ENCODE measurements at regions of chr14 and their contacts with region 1.

Region 1: DNA sequence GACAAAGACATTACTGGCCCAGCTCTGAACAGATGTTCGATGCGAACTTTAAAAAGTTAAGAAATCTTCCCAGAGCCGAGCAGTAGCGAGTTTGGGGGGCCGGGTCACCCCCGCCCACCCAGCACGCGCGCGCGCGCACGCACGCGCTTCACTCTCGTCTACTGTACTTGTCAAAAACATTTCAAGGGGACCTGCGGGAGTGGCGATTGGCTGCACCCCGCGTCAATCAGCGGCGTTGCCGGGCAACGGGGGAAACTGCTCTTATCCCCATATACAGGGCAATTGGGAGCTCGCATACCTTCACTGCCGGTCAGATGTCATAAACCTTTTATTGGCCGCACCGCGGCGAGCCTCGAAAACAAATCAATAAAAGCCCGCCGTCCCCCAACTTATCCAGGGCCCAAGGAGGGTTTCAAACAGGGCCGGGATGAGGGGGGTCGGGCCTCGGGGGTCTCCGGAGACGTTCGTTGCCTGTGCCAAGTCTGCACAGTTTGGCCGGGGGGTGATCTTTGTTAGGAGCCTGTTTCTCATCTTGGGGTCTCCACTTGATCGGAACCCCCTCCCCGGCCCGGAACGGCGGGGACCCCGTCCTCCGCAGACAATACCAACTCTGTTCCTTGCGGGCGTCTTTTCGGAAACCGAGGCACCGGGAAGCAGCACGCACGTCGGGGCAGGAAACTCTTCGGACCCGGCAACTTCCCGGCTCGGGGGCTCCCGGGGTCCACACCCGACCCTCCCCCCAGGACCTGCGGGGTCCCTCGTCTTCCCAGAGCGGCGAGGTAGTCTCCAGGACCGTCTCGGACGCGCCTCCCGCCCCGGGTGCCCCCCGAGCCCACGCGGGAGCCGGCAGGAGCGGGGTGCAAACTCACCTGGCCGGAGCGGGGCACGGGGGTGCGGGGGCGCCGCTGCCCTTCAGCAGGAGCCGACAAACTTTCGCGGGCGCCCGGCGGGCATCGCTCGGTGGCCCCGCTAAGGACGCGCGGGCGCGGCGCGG is 734 bp downstream of the FOXN3 start:
- DNase-seq: peak; percentile 100
- ATAC-seq: peak; percentile 64
- H3K4me3 Mint-ChIP-seq: peak overlapping the region; percentile 92
- H3K27ac Mint-ChIP-seq: peak overlapping the region; percentile 95
- H3K4me1 Mint-ChIP-seq: peaks cover 48% of the 10 kb centered on the region
- H3K27me3 Mint-ChIP-seq: no peaks in the 10 kb centered on the region
- CTCF ChIP-seq: no peak

Region 2: DNA sequence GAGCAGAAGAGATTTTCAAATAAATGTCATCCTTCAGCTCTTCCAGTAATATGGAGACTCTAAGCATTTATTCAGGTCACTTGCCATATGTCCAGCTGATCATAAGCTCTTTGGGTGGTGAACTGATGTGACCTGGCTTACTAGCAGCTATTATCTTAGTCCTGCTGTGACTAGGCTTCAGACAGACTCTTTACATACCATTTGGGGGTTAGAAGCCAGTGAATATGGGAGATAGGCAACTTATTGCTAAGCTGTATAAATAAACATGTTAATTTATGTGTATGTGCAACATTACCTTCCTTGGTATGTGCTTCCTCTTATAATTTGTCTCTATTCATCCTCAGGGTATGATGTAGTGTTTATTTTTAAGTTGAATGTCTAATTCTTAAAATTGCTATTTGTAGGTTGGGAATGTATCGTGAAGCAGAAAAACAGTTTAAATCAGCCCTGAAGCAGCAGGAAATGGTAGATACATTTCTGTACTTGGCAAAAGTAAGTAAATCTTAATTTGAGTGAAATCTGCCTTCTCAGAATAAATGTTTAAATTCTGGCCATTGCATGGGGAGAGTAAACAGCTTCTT is 559.4 kb before region 1 on chr14:
- CTCF ChIA-PET with region 1: no interaction called
- POLR2A ChIA-PET with region 1: no interaction called
- intact Hi-C with region 1: no loop called
- DNase-seq: no peak
- ATAC-seq: no peak
- H3K4me3 Mint-ChIP-seq: no peak overlapping the region
- H3K27ac Mint-ChIP-seq: no peak overlapping the region
- H3K4me1 Mint-ChIP-seq: no peaks in the 10 kb centered on the region
- H3K27me3 Mint-ChIP-seq: no peaks in the 10 kb centered on the region
- CTCF ChIP-seq: no peak

Region 3: DNA sequence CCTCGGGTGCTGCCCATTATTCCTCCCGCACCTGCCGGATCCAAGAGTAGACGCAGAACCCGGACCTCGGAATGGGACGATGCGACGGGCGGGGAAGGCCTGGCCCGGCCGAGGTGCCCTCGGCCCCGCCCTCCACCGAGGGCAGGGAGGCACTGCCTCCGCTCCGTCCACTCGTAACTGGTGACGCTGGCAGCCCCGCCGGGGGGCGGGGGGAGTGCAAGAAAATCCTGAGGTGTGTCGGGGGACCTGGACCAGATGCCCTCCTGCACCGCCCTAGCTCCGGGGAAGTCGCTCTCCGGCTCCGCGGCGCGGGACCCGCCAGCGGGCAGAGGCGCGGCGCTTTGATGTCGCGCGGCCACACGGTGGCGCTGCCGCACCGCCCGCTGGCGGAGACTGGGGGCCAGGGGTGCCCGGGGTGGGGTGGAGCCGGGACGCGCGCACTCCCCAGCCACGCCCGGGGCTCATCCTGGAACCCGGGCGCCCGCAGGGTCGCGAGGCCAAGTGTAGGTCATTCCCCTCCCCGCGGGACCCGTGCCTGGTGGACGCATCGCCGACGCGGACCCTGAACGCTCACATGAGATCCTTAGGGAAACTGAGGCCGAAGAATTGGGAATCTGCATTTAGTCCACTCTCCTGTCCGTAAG is 389.1 kb before region 1 on chr14:
- CTCF ChIA-PET with region 1: no interaction called
- POLR2A ChIA-PET with region 1: no interaction called
- intact Hi-C with region 1: loop called (anchors 5 kb)
- DNase-seq: peak; percentile 67
- ATAC-seq: peak; percentile 92
- H3K4me3 Mint-ChIP-seq: peak overlapping the region; percentile 65
- H3K27ac Mint-ChIP-seq: no peak overlapping the region
- H3K4me1 Mint-ChIP-seq: peaks cover 3% of the 10 kb centered on the region
- H3K27me3 Mint-ChIP-seq: peaks cover 41% of the 10 kb centered on the region
- CTCF ChIP-seq: peak; percentile 54

Region 4: DNA sequence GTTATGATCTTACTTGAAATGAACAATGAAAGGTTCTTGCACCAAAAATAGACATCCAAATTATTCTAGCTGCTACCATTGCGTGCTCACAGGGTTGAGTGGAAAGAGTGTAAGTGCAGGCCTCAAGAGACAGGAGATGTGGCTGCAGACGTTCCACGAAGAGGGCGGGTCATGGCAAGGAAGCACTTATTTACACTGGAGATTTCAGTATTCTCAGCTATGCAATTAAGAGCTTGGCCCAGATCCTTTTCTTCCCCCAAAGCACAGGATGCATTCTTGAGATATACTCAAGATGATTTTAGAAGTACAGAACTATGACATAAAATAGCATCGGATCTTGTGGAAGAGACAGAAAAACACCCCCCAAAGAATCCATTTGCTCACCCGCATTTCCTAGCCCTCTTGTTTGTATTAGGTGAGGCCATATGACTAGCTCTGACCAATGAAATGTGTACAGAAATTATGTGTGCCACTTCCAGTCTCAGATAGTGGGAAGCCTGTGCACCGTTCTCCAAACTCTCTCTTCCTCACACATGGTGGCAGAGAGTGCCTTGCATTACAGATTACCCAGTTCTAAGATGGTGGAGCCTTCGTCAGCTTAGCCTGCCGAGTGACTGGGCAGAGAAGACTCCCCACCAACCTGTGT is 330.4 kb before region 1 on chr14:
- CTCF ChIA-PET with region 1: no interaction called
- POLR2A ChIA-PET with region 1: no interaction called
- intact Hi-C with region 1: no loop called
- DNase-seq: no peak
- ATAC-seq: no peak
- H3K4me3 Mint-ChIP-seq: no peak overlapping the region
- H3K27ac Mint-ChIP-seq: no peak overlapping the region
- H3K4me1 Mint-ChIP-seq: no peaks in the 10 kb centered on the region
- H3K27me3 Mint-ChIP-seq: peaks cover 3% of the 10 kb centered on the region
- CTCF ChIP-seq: no peak

Region 5: DNA sequence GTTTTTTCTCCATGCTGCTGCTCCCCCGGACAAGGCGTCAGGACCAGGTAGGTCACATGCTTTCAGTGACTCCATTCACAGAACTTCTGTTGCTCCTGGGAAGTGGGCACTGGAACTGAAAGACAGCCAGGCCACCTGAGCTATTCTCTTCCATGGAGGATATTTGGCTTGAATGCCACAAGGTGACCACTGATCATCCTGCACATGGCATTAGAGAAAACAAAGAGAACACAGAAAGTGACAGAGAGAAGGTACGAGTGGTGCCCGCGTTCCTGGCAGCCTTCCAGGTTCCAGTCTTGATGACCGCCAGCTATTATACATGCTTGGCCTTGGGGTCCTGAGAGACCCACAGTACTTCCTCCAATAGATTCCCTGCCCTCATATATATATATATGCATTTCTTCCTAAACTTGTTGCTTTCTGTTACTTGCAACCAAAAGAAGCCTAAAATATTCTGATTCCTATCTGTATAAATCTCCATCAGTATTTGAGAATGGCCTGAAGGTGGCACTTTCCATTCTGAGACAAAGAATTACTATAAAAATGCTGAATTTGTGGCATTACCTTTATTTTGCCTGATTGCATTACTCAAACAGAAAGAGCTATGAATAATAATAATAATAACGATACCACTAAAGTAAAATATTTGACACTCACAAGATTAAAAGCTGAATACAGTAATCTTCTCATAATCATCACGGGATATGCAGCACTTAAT is 174.2 kb before region 1 on chr14:
- CTCF ChIA-PET with region 1: no interaction called
- POLR2A ChIA-PET with region 1: no interaction called
- intact Hi-C with region 1: loop called (anchors 1 kb)
- DNase-seq: no peak
- ATAC-seq: no peak
- H3K4me3 Mint-ChIP-seq: peak overlapping the region; percentile 4
- H3K27ac Mint-ChIP-seq: peak overlapping the region; percentile 3
- H3K4me1 Mint-ChIP-seq: peaks cover 56% of the 10 kb centered on the region
- H3K27me3 Mint-ChIP-seq: no peaks in the 10 kb centered on the region
- CTCF ChIP-seq: no peak

Region 6: GRCh38 chr14:89351516-89352404 is 64.5 kb before region 1 on chr14:
- CTCF ChIA-PET with region 1: no interaction called
- POLR2A ChIA-PET with region 1: interaction called, 6 read pairs
- intact Hi-C with region 1: loop called (anchors 1 kb)
- DNase-seq: no peak
- ATAC-seq: peak; percentile 77
- H3K4me3 Mint-ChIP-seq: peak overlapping the region; percentile 77
- H3K27ac Mint-ChIP-seq: peak overlapping the region; percentile 94
- H3K4me1 Mint-ChIP-seq: peaks cover 63% of the 10 kb centered on the region
- H3K27me3 Mint-ChIP-seq: no peaks in the 10 kb centered on the region
- CTCF ChIP-seq: no peak

Region 7: DNA sequence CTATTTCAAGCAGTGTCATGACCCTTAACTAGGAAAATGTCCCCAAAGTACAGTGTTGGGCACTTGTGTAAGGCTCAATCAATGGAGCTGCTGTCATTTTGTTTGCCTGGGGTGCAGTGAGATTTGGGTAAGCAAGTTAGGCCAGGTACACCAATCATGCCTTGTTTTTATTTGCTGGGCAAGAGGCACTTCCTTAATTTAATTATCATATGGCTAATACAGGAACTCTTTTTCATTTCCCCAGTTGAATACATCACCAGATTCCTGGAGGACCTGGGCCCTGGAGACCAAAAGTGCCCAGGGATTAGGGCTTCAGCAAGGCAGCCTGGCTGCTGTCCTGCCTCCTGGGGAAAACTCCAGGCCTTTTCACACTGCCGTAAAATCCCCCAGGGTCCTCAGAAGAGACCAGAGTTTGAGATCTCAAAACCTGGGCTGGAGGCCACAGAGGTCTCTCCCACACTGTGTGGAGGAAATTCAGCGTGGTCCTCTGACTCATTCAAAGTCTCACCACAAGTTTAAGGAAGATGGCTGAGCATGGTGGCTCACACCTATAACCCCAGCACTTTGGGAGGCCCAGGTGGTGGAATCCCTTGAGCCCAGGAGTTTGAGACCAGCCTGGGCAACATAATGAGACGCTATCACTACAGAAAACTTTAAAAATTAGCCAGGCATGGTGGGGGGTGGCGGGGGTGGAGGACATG is 29.1 kb after region 1 on chr14:
- CTCF ChIA-PET with region 1: no interaction called
- POLR2A ChIA-PET with region 1: no interaction called
- intact Hi-C with region 1: loop called (anchors 1 kb)
- DNase-seq: no peak
- ATAC-seq: peak; percentile 65
- H3K4me3 Mint-ChIP-seq: peak overlapping the region; percentile 55
- H3K27ac Mint-ChIP-seq: peak overlapping the region; percentile 85
- H3K4me1 Mint-ChIP-seq: peaks cover 78% of the 10 kb centered on the region
- H3K27me3 Mint-ChIP-seq: no peaks in the 10 kb centered on the region
- CTCF ChIP-seq: no peak

Region 8: DNA sequence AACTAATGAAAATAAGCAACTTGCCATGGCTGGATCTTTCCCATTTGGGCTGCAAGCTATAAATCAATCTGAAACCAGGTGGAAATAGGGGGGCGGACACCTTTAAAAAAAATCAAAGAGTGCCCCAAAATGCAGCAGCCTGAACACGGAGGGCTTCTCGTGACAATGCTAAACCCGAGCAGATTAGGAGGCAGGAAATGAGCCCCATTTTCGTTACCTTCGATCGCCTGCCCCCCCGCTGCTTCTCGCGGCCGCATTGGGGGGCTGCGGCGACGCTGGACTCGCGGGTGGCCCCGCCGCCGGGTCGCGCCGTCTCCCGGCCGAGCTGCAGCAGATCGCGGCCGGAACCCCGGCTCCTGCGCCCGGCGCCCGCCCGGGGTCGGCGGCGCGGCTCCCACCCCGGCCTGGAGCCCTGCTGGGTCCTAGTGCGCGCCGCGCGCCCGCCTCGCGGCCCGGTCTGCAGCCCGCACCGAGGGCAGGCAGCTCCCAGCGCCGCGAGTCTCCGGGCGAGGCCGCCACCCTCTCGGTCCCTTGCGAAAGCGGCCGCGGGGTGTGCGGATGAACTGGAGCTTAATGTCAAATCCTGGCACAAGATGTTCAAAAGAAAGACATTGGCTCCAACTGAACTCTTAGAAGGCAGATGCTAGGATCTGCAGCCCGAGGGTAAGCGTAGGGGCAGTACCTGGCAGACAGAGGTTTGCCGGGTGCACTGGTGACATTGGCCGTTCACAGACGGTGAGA is 202.7 kb after region 1 on chr14:
- CTCF ChIA-PET with region 1: no interaction called
- POLR2A ChIA-PET with region 1: interaction called, 3 read pairs
- intact Hi-C with region 1: loop called (anchors 1 kb)
- DNase-seq: peak; percentile 69
- ATAC-seq: peak; percentile 73
- H3K4me3 Mint-ChIP-seq: peak overlapping the region; percentile 90
- H3K27ac Mint-ChIP-seq: peak overlapping the region; percentile 86
- H3K4me1 Mint-ChIP-seq: peaks cover 68% of the 10 kb centered on the region
- H3K27me3 Mint-ChIP-seq: no peaks in the 10 kb centered on the region
- CTCF ChIP-seq: no peak

Region 9: GRCh38 chr14:89899917-89900663 is 483.8 kb after region 1 on chr14:
- CTCF ChIA-PET with region 1: no interaction called
- POLR2A ChIA-PET with region 1: no interaction called
- intact Hi-C with region 1: loop called (anchors 2 kb)
- DNase-seq: no peak
- ATAC-seq: peak; percentile 31
- H3K4me3 Mint-ChIP-seq: no peak overlapping the region
- H3K27ac Mint-ChIP-seq: no peak overlapping the region
- H3K4me1 Mint-ChIP-seq: peaks cover 3% of the 10 kb centered on the region
- H3K27me3 Mint-ChIP-seq: no peaks in the 10 kb centered on the region
- CTCF ChIP-seq: no peak

Measured in activated B cell treated with CpG ODN at 0.5 μM for 24 hours (primary cell).